ENCODE measurements at regions of chr20 and their contacts with region 1.

Region 1: GRCh38 chr20:44790638-44791393 is 19.5 kb downstream of the RIMS4 start:
- H3K4me3 Mint-ChIP-seq: no peak overlapping the region
- H3K27ac Mint-ChIP-seq: no peak overlapping the region
- H3K4me1 Mint-ChIP-seq: no peaks in the 10 kb centered on the region
- H3K27me3 Mint-ChIP-seq: peaks cover 10% of the 10 kb centered on the region

Region 2: GRCh38 chr20:44692932-44693476 is 97.8 kb before region 1 on chr20:
- intact Hi-C with region 1: no loop called
- H3K4me3 Mint-ChIP-seq: no peak overlapping the region
- H3K27ac Mint-ChIP-seq: no peak overlapping the region
- H3K4me1 Mint-ChIP-seq: peaks cover 14% of the 10 kb centered on the region
- H3K27me3 Mint-ChIP-seq: no peaks in the 10 kb centered on the region

Region 3: DNA sequence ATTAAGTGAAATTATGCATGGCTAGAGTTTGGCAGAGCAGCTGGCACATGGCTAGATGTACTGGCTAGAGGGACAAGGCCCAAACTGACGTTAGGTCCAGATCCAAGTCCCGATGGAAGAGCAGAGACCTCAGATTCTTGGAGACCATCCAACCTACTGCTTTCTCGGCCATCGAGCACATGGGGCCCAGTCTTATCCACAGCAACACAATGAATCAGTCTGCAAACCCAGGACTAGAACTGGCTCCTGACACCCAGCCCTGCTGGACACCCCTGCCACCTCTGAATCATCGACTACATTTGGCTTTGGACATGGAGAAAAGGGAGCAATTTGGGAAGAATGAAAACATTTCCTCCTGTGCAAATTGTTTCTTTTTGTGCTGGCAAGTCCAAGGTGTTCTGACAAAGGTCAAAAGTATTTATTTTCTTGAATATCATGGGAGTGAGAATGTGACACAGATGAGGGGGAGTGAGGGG is 70.8 kb after region 1 on chr20:
- intact Hi-C with region 1: loop called (anchors 10 kb)
- H3K4me3 Mint-ChIP-seq: no peak overlapping the region
- H3K27ac Mint-ChIP-seq: no peak overlapping the region
- H3K4me1 Mint-ChIP-seq: peaks cover 20% of the 10 kb centered on the region
- H3K27me3 Mint-ChIP-seq: no peaks in the 10 kb centered on the region

Measured in dendritic cell treated with granulocyte-macrophage colony-stimulating factor and Interleukin-4, amounts not matched to agents 40 ng/mL and 50 ng/mL, for 4 days (primary cell).